H1 (cell line): ENCODE measurements at regions of chr20 and their contacts with region 1.

Region 1: GRCh38 chr20:57089691-57090150 is 176.7 kb downstream of the BMP7 start:
- DNase-seq: peak; percentile 43 to 97
- H3K4me3 ChIP-seq: no peak overlapping the region
- H3K27ac ChIP-seq: no peak overlapping the region
- H3K4me1 ChIP-seq: peaks cover 0 to 6% (median 4%) of the 10 kb centered on the region in 4 experiments; a peak in 4 of 7 replicates
- H3K27me3 ChIP-seq: peaks cover 0 to 14% (median 7%) of the 10 kb centered on the region in 4 experiments; a peak in 5 of 7 replicates
- CTCF ChIP-seq: peak; percentile 86 to 97 (median 88)
- EP300 ChIP-seq: no peak
- POLR2A ChIP-seq: no peak
- RAD21 ChIP-seq: peak; percentile 96 to 98

Region 2: GRCh38 chr20:57061058-57061900 is 28.4 kb before region 1 on chr20:
- CTCF ChIA-PET with region 1: interaction called, 12 read pairs
- POLR2A ChIA-PET with region 1: no interaction called
- DNase-seq: peak in 1 of 2 experiments; percentile 75
- H3K4me3 ChIP-seq: no peak overlapping the region
- H3K27ac ChIP-seq: no peak overlapping the region
- H3K4me1 ChIP-seq: no peaks in the 10 kb centered on the region
- H3K27me3 ChIP-seq: no peaks in the 10 kb centered on the region; a peak in 1 of 7 replicates
- CTCF ChIP-seq: peak; percentile 65 to 81 (median 66)
- EP300 ChIP-seq: no peak
- POLR2A ChIP-seq: no peak
- RAD21 ChIP-seq: peak; percentile 89

Region 3: GRCh38 chr20:57071283-57071770 is 18.4 kb before region 1 on chr20:
- CTCF ChIA-PET with region 1: interaction called, 15 read pairs
- POLR2A ChIA-PET with region 1: no interaction called
- DNase-seq: peak in 1 of 2 experiments; percentile 69
- H3K4me3 ChIP-seq: peak overlapping the region; percentile 42 to 59 (median 52); a peak in 7 of 8 replicates
- H3K27ac ChIP-seq: no peak overlapping the region
- H3K4me1 ChIP-seq: peaks cover 4 to 18% (median 9%) of the 10 kb centered on the region in 4 experiments
- H3K27me3 ChIP-seq: peaks cover 4 to 27% (median 19%) of the 10 kb centered on the region in 4 experiments
- CTCF ChIP-seq: no peak
- EP300 ChIP-seq: no peak; a peak in 1 of 3 replicates
- POLR2A ChIP-seq: no peak
- RAD21 ChIP-seq: no peak

Region 4: DNA sequence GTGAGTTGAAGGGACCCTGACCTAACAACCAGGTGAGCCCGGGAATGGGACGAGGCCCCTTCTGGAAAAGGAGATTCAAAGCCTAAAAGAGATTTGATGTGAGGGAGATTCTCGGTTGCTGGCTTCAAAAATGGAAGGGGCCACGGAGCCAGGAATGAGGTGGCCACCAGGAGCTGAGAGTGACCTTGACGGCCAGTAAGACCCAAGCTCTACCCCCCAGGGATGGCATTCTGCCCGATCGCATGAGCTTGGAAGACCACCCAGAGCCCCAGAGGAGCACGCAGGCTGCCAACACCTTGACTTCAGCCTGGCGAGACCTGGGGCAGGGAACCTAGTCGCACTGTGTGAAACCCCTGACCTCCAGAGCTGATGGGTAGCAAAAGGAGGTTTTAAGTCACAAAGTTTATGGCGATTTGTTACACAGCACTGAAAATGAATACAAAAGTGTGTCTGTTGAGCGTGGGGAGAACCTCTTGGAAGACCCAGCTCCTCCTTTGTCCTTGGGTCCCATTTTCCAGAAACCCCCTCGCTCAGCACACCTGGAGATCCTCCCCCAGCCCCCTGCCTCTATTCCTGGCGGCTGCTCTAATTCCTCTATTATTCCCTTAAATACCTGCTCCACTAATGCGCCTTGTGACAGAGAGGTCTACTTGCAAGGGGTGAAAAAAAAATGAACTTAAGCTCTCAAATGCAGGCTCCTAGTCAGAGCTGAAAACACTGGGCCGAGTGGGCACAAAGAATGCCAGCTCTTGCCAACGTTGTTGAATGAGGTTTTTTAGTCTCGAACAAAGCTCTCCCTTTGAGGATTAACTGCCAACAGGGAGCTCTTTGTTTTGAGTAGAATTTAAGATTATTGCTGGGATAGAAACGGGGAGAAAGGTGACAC is 13.1 kb after region 1 on chr20:
- CTCF ChIA-PET with region 1: interaction called, 17 read pairs
- POLR2A ChIA-PET with region 1: no interaction called
- DNase-seq: no peak
- H3K4me3 ChIP-seq: no peak overlapping the region
- H3K27ac ChIP-seq: no peak overlapping the region
- H3K4me1 ChIP-seq: no peaks in the 10 kb centered on the region
- H3K27me3 ChIP-seq: no peaks in the 10 kb centered on the region
- CTCF ChIP-seq: no peak
- EP300 ChIP-seq: no peak
- POLR2A ChIP-seq: no peak
- RAD21 ChIP-seq: no peak